ENCODE measurements at regions of chr10 and their contacts with region 1.

Region 1: GRCh38 chr10:102988404-102989314 is 70.6 kb downstream of the CNNM2 start:
- DNase-seq: no peak
- H3K4me3 Mint-ChIP-seq: no peak overlapping the region
- H3K27ac Mint-ChIP-seq: no peak overlapping the region
- H3K4me1 Mint-ChIP-seq: no peaks in the 10 kb centered on the region
- H3K27me3 Mint-ChIP-seq: no peaks in the 10 kb centered on the region
- CTCF ChIP-seq: no peak

Region 2: GRCh38 chr10:103040418-103040817 is 51.8 kb after region 1 on chr10:
- CTCF ChIA-PET with region 1: no interaction called
- intact Hi-C with region 1: loop called (anchors 10 kb)
- DNase-seq: no peak
- H3K4me3 Mint-ChIP-seq: no peak overlapping the region
- H3K27ac Mint-ChIP-seq: no peak overlapping the region
- H3K4me1 Mint-ChIP-seq: no peaks in the 10 kb centered on the region
- H3K27me3 Mint-ChIP-seq: peaks cover 11% of the 10 kb centered on the region
- CTCF ChIP-seq: no peak

Measured in Calu3 (cell line).